ENCODE measurements at regions of chr9 and their contacts with region 1.

Region 1: DNA sequence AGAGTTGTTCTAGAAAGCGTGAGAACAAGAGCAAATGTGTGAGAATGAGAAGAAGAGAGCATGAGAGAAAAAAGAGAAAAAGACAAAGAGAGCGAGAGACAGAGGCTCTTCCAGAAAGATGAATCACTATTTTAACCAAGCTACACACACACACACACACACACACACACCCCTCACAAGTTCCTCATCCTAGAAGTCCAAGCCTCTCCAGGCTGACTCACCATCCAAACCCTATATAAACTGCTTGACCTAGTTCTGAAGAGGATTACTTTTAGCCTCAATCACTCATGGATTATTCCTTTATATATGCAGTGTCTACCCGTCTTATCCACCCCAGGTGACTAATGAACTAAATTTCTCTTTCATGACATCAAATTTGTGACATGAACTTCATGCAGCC is 37.6 kb downstream of the C9orf57 start:
- DNase-seq: no peak
- H3K4me3 ChIP-seq: no peak overlapping the region
- H3K27ac ChIP-seq: no peak overlapping the region
- H3K4me1 ChIP-seq: peaks cover 0 to 5% (median 3%) of the 10 kb centered on the region in 6 donors
- H3K27me3 ChIP-seq: no peaks in the 10 kb centered on the region
- CTCF ChIP-seq: no peak
- POLR2A ChIP-seq: no peak

Region 2: GRCh38 chr9:71285191-71285656 is 737.6 kb before region 1 on chr9:
- intact Hi-C with region 1: loop called (anchors 10 kb)
- DNase-seq: no peak
- H3K4me3 ChIP-seq: no peak overlapping the region
- H3K27ac ChIP-seq: no peak overlapping the region
- H3K4me1 ChIP-seq: no peaks in the 10 kb centered on the region
- H3K27me3 ChIP-seq: no peaks in the 10 kb centered on the region
- CTCF ChIP-seq: peak; percentile 29 to 78 (median 69)
- POLR2A ChIP-seq: no peak

Region 3: DNA sequence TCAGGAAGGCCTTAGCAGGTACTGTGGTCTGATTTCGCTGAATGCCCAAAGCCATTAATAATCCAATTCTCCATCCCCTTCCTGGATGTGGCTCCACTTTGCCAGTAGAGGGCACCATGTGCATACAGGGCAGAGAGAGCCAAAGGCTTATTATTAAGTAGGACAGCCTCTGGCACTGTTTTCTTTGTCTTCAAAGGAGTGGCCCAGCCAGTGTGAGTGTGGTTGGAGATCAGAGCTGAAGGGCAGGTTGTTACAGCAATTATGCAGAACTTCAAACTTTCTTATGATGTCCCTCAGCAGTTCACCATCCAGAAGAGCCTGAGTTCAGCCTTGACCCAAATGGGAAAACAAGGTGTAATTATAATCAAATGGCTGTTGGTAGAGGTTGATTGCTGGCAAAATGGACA is 215.9 kb before region 1 on chr9:
- intact Hi-C with region 1: loop called (anchors 5 kb)
- DNase-seq: peak; percentile 80
- H3K4me3 ChIP-seq: no peak overlapping the region
- H3K27ac ChIP-seq: peak overlapping the region in 1 of 8 donors; percentile 33
- H3K4me1 ChIP-seq: peaks cover 3 to 11% (median 8%) of the 10 kb centered on the region in 6 donors
- H3K27me3 ChIP-seq: no peaks in the 10 kb centered on the region
- CTCF ChIP-seq: peak; percentile 66 to 85 (median 83)
- POLR2A ChIP-seq: no peak

Region 4: GRCh38 chr9:72428329-72428728 is 405.5 kb after region 1 on chr9:
- intact Hi-C with region 1: no loop called
- DNase-seq: no peak
- H3K4me3 ChIP-seq: no peak overlapping the region
- H3K27ac ChIP-seq: no peak overlapping the region
- H3K4me1 ChIP-seq: no peaks in the 10 kb centered on the region
- H3K27me3 ChIP-seq: no peaks in the 10 kb centered on the region
- CTCF ChIP-seq: no peak
- POLR2A ChIP-seq: no peak